Activated CD4-positive, alpha-beta T cell treated with anti-CD3 and anti-CD28 coated beads, Interleukin-2, amount 10 ng/mL, durations not matched to agents 7 days and 5 days (primary cell): ENCODE measurements at regions of chr6 and their contacts with region 1.

Region 1: GRCh38 chr6:593139-593906 is 63.6 kb downstream of the HUS1B start:
- DNase-seq: peak; percentile 77
- H3K4me3 Mint-ChIP-seq: no peak overlapping the region
- H3K27ac Mint-ChIP-seq: no peak overlapping the region
- H3K4me1 Mint-ChIP-seq: peaks cover 15% of the 10 kb centered on the region
- H3K27me3 Mint-ChIP-seq: no peaks in the 10 kb centered on the region

Region 2: GRCh38 chr6:582370-582769 is 11.0 kb before region 1 on chr6:
- CTCF ChIA-PET with region 1: interaction called, 22 read pairs
- POLR2A ChIA-PET with region 1: no interaction called
- DNase-seq: no peak
- H3K4me3 Mint-ChIP-seq: no peak overlapping the region
- H3K27ac Mint-ChIP-seq: no peak overlapping the region
- H3K4me1 Mint-ChIP-seq: peaks cover 31% of the 10 kb centered on the region
- H3K27me3 Mint-ChIP-seq: no peaks in the 10 kb centered on the region